Panc1 (cell line): ENCODE measurements at regions of chr19 and their contacts with region 1.

Region 1: DNA sequence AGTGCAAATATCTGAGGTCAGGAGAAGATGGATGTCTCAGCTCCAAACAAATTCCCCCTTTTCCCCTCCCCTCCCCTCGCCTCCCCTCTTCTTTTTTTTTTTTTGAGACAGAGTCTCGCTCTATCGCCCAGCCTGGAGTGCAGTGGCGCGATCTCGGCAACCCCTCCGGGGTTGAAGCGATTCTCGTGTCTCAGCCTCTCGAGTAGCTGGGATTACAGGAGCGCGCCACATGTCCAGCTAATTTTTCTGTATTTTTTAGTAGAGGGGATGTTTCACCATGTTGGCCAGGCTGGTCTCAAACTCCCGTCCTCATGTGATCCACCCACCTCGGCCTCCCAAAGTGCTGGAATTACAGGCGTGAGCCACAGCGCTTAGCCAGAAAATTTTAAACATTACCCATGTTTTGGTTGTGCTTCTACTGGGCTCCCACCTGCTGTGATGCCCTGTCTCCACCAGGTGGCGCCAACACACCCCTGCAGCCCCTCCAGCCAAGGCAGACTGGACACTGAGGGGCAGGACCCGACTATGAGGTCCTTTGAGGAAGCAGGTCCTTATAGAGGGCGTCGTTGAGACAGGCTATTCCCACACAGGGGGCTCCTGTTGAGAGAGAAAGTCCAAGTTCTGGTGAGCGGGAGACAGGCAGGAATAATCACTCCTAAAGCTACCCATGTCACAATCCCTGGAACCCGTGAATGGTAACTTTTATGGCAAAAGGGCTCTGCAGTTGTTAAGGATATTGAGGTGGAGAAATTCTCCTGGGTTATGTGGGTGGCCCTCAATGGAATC is 6.3 kb downstream of the ERICH4 start:
- DNase-seq: peak; percentile 45
- ATAC-seq: peak; percentile 95
- H3K4me3 ChIP-seq: peak overlapping the region in 1 of 2 experiments; percentile 29; a peak in 1 of 4 replicates
- H3K27ac ChIP-seq: no peak overlapping the region
- H3K4me1 ChIP-seq: no peaks in the 10 kb centered on the region
- H3K27me3 ChIP-seq: no peaks in the 10 kb centered on the region
- CTCF ChIP-seq: peak; percentile 93

Region 2: GRCh38 chr19:41563854-41564514 is 114.7 kb after region 1 on chr19:
- CTCF ChIA-PET with region 1: interaction called, 11 read pairs
- POLR2A ChIA-PET with region 1: interaction called, 4 read pairs
- in situ Hi-C with region 1: no loop called
- intact Hi-C with region 1: loop called (anchors 2 kb)
- DNase-seq: no peak
- ATAC-seq: no peak
- H3K4me3 ChIP-seq: no peak overlapping the region
- H3K27ac ChIP-seq: no peak overlapping the region
- H3K4me1 ChIP-seq: no peaks in the 10 kb centered on the region
- H3K27me3 ChIP-seq: peaks cover 9% of the 10 kb centered on the region
- CTCF ChIP-seq: no peak

Region 3: DNA sequence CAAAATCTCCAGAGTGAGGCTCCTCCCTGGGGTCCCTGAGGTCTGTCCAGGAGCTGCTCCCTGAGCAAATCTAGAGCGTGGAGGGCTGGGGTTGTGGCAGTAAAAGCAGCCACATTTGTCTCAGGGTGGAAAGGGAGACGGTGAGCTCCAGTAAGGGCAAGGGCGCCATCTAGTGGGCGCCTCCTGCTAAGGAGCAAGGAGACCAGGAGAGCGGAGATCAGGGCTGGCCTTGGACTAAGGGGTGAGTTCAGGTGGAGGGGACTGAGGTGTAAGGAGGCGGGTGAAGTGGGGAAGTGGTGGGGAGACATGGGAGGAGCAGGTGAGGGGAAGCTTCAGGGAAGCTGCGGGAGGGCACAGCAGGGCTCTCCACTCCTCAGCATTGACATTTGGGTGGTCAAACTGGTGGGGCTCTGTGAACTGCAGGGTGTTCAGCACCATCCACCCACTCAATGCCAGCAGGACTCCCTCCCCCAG is 121.4 kb after region 1 on chr19:
- CTCF ChIA-PET with region 1: interaction called, 11 read pairs
- POLR2A ChIA-PET with region 1: no interaction called
- in situ Hi-C with region 1: no loop called
- intact Hi-C with region 1: no loop called
- DNase-seq: peak; percentile 33
- ATAC-seq: peak; percentile 98
- H3K4me3 ChIP-seq: no peak overlapping the region
- H3K27ac ChIP-seq: no peak overlapping the region
- H3K4me1 ChIP-seq: no peaks in the 10 kb centered on the region
- H3K27me3 ChIP-seq: peaks cover 4% of the 10 kb centered on the region
- CTCF ChIP-seq: peak; percentile 89